CD4-positive, alpha-beta memory T cell (primary cell): ENCODE measurements at regions of chr12 and their contacts with region 1.

Region 1: GRCh38 chr12:47079468-47079980 is at the starts of genes AMIGO2 and PCED1B:
- DNase-seq: peak; percentile 43 to 63 (median 51)
- H3K4me3 ChIP-seq: peak within 1 kb of the TSS; percentile 91 to 92
- H3K4me3 Mint-ChIP-seq: peak within 1 kb of the TSS; percentile 96 to 99 (median 98)
- H3K27ac ChIP-seq: peak within 1 kb of the TSS; percentile 74
- H3K27ac Mint-ChIP-seq: peak within 1 kb of the TSS; percentile 92 to 99 (median 98)
- H3K4me1 ChIP-seq: peaks cover 66% of the 10 kb centered on the region
- H3K4me1 Mint-ChIP-seq: peaks cover 52 to 83% (median 66%) of the 10 kb centered on the region in 4 donors
- H3K27me3 ChIP-seq: no peaks in the 10 kb centered on the region
- H3K27me3 Mint-ChIP-seq: peaks cover 0 to 1% of the 10 kb centered on the region in 2 donors
- total RNA-seq, gene AMIGO2: 12.8 to 13.1 TPM
- total RNA-seq, gene PCED1B: 44.3 to 49.0 TPM

Region 2: DNA sequence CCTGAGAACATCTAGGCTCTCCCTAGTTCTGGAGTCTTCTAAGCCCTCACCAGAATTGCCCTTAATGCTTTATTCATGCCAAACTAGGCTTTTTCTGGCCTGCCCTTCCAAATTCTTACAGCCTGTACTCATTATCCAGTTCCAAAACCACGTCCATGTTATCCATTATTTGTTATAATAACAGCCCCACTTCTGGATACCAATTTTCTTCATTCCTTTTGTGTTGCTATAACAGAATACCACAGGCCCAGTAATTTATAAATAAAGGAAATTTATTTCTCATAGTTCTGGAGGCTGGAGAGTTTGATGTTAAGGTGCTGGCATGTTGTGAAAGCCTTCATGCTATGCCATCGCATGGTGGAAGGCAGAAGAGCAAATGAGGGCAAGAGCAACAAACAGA is 68.2 kb after region 1 on chr12:
- CTCF ChIA-PET with region 1: interaction called, 3 read pairs
- POLR2A ChIA-PET with region 1: interaction called, 15 read pairs
- intact Hi-C with region 1: loop called (anchors 5 kb)
- DNase-seq: no peak
- H3K4me3 ChIP-seq: no peak overlapping the region
- H3K4me3 Mint-ChIP-seq: no peak overlapping the region
- H3K27ac ChIP-seq: no peak overlapping the region
- H3K27ac Mint-ChIP-seq: peak overlapping the region in 1 of 7 donors; percentile 48
- H3K4me1 ChIP-seq: peaks cover 17% of the 10 kb centered on the region
- H3K4me1 Mint-ChIP-seq: peaks cover 18 to 32% (median 21%) of the 10 kb centered on the region in 4 donors
- H3K27me3 ChIP-seq: no peaks in the 10 kb centered on the region
- H3K27me3 Mint-ChIP-seq: no peaks in the 10 kb centered on the region

Region 3: GRCh38 chr12:47190271-47190750 is 110.8 kb after region 1 on chr12:
- CTCF ChIA-PET with region 1: interaction called, 25 read pairs
- POLR2A ChIA-PET with region 1: interaction called, 57 read pairs
- intact Hi-C with region 1: loop called (anchors 1 kb)
- DNase-seq: no peak
- H3K4me3 ChIP-seq: no peak overlapping the region
- H3K4me3 Mint-ChIP-seq: peak overlapping the region in 7 of 8 donors; percentile 8 to 93 (median 69)
- H3K27ac ChIP-seq: peak overlapping the region; percentile 42
- H3K27ac Mint-ChIP-seq: peak overlapping the region; percentile 62 to 95 (median 93)
- H3K4me1 ChIP-seq: peaks cover 80% of the 10 kb centered on the region
- H3K4me1 Mint-ChIP-seq: peaks cover 67 to 90% (median 78%) of the 10 kb centered on the region in 4 donors
- H3K27me3 ChIP-seq: no peaks in the 10 kb centered on the region
- H3K27me3 Mint-ChIP-seq: no peaks in the 10 kb centered on the region

Region 4: GRCh38 chr12:47276621-47277309 is 197.2 kb after region 1 on chr12:
- CTCF ChIA-PET with region 1: interaction called, 3 read pairs
- POLR2A ChIA-PET with region 1: interaction called, 15 read pairs
- intact Hi-C with region 1: no loop called
- DNase-seq: peak; percentile 75 to 85 (median 81)
- H3K4me3 ChIP-seq: peak overlapping the region in 1 of 2 donors; percentile 19
- H3K4me3 Mint-ChIP-seq: peak overlapping the region; percentile 51 to 87 (median 74)
- H3K27ac ChIP-seq: peak overlapping the region; percentile 55
- H3K27ac Mint-ChIP-seq: peak overlapping the region; percentile 85 to 98 (median 92)
- H3K4me1 ChIP-seq: peaks cover 44% of the 10 kb centered on the region
- H3K4me1 Mint-ChIP-seq: peaks cover 32 to 59% (median 53%) of the 10 kb centered on the region in 4 donors
- H3K27me3 ChIP-seq: no peaks in the 10 kb centered on the region
- H3K27me3 Mint-ChIP-seq: no peaks in the 10 kb centered on the region

Region 5: DNA sequence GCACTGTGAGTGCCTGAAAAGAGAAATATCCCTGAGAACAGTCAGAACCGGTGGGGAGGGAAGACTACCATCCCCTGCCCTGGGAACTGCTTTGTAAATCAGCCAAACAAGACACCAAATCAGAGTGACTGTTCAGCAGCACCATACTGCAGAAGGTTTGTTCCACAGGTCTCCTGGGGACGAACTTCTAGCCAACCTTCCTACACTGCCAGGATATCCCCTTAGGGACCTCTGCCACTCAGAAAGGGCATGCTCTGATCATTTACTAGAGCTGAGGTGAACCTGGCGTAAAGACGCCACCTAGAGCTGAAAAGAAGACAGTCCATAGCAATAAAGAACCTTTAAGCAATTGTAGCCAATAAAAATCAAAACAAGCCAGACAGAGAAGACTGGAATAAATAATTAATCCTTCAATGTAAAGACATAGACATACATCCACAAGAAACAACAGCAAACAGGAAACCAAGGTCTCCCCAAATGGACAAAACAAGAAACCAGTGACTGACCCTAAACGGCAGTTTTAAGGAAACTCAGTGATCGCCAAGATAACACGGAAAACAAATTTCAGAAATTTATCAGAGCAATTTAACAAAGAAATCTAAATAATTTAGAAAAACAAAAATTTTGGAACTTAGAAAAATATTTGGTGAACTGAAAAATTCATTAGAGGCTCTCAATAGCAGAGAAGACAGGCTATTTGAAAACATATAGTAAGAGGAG is 228.3 kb after region 1 on chr12:
- CTCF ChIA-PET with region 1: interaction called, 20 read pairs
- POLR2A ChIA-PET with region 1: interaction called, 39 read pairs
- intact Hi-C with region 1: loop called (anchors 1 kb)
- DNase-seq: peak; percentile 64 to 72 (median 66)
- H3K4me3 ChIP-seq: peak overlapping the region; percentile 78 to 82
- H3K4me3 Mint-ChIP-seq: peak overlapping the region; percentile 89 to 99 (median 94)
- H3K27ac ChIP-seq: peak overlapping the region; percentile 51
- H3K27ac Mint-ChIP-seq: peak overlapping the region; percentile 82 to 95 (median 93)
- H3K4me1 ChIP-seq: peaks cover 13% of the 10 kb centered on the region
- H3K4me1 Mint-ChIP-seq: peaks cover 21 to 43% (median 32%) of the 10 kb centered on the region in 4 donors
- H3K27me3 ChIP-seq: no peaks in the 10 kb centered on the region
- H3K27me3 Mint-ChIP-seq: no peaks in the 10 kb centered on the region